Activated CD8-positive, alpha-beta memory T cell treated with anti-CD3 and anti-CD28 coated beads, Interleukin-2, amount 10 ng/mL, durations not matched to agents 7 days and 5 days (primary cell): ENCODE measurements at regions of chr1 and their contacts with region 1.

Region 1: DNA sequence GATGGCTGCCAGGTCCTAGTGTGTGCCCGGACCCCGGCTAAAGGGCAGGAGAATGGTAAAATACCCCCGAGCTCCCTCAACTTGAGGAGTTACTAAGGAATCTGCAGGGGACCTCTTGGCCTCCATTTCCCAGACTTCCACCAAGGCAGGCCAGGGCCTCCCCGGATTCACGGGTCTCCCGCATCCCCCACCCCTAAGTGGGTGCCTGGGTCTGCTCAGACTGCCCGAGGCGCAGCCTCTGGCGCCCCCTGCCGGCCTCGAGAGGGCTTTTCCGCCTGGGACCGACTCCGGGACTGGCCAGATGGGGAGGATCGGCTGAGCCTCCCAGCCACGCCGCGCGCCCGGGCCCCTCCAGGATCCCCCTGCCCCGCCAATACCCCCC is 1.7 kb downstream of the PLEKHG5 start:
- DNase-seq: peak; percentile 84
- ATAC-seq: peak; percentile 80
- H3K4me3 Mint-ChIP-seq: peak overlapping the region; percentile 73
- H3K27ac Mint-ChIP-seq: peak overlapping the region; percentile 78
- H3K4me1 Mint-ChIP-seq: peaks cover 9% of the 10 kb centered on the region
- H3K27me3 Mint-ChIP-seq: peaks cover 27% of the 10 kb centered on the region

Region 2: GRCh38 chr1:6343506-6344405 is 146.0 kb before region 1 on chr1:
- CTCF ChIA-PET with region 1: interaction called, 14 read pairs
- DNase-seq: peak; percentile 78
- ATAC-seq: peak; percentile 60
- H3K4me3 Mint-ChIP-seq: no peak overlapping the region
- H3K27ac Mint-ChIP-seq: no peak overlapping the region
- H3K4me1 Mint-ChIP-seq: peaks cover 10% of the 10 kb centered on the region
- H3K27me3 Mint-ChIP-seq: no peaks in the 10 kb centered on the region

Region 3: DNA sequence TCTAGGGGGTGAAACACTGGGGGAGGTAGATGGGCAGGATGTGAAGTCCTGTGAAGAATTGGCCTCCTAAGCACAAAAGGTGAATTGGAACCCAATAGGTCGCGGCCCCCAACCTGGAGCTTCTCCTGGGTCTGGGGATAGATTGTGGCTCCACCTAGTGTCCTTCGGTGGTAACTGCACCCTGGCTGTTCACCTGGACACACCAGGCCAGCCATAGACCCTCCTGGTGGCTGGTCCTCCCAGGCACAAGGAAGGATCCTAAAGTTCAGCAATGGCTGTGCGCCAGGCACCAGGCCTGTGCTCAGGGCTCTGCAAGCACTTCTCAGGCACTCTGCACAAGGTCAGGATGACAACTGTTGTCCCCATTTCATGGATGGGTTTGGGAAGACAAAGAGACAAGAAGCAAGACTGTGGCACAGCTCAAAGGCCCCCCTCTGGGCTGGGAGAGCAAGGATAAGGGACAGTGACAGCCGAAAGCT is 51.7 kb before region 1 on chr1:
- CTCF ChIA-PET with region 1: interaction called, 26 read pairs
- DNase-seq: peak; percentile 83
- ATAC-seq: peak; percentile 62
- H3K4me3 Mint-ChIP-seq: no peak overlapping the region
- H3K27ac Mint-ChIP-seq: no peak overlapping the region
- H3K4me1 Mint-ChIP-seq: peaks cover 3% of the 10 kb centered on the region
- H3K27me3 Mint-ChIP-seq: peaks cover 34% of the 10 kb centered on the region

Region 4: GRCh38 chr1:6475381-6476133 is 14.2 kb before region 1 on chr1:
- CTCF ChIA-PET with region 1: interaction called, 22 read pairs
- DNase-seq: peak; percentile 79
- ATAC-seq: peak; percentile 91
- H3K4me3 Mint-ChIP-seq: no peak overlapping the region
- H3K27ac Mint-ChIP-seq: no peak overlapping the region
- H3K4me1 Mint-ChIP-seq: no peaks in the 10 kb centered on the region
- H3K27me3 Mint-ChIP-seq: no peaks in the 10 kb centered on the region

Region 5: DNA sequence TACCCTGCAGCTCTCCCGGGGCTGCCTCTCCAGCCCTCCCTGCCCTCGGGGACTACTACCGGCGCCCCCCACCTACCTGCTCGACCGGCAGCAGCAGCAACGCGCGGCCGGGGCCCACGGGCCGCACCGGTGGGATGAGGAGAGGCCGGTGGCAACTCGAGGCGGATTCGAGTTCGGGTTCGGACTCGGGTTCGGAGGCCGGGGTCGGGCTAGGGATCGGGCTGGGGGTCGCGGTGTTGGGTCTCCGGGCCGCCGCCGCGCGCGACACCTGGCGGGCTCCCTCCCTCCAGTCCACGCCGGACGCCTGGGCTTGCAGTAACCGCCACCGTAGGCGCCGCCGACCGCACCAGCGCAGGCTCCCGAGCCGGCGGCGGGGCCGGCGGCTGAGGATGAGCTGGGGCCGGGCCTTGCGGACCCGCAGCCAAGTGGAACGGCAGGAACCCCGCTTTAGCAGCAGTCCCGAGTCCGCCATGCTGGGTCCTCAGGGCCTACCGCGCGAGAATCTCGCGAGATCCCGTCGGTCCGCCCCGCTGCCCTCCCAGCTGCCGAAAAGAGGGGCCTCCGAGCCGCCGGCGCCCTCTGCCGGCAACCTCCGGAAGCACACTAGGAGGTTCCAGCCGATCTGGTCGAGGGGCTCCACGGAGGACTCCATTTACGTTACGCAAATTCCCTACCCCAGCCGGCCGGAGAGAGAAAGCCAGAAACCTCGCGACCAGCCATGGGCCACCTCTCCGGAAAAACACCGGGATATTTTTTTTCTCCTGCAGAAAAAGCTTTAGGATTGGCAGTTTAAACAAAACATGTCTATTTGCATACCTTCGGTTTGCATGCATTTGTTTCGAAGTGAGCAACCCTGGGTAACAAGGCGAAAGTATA is 64.5 kb after region 1 on chr1 and contains the start of gene NOL9:
- CTCF ChIA-PET with region 1: interaction called, 33 read pairs
- DNase-seq: peak; percentile 97
- ATAC-seq: peak; percentile 98
- H3K4me3 Mint-ChIP-seq: peak within 1 kb of the TSS; percentile 76
- H3K27ac Mint-ChIP-seq: peak within 1 kb of the TSS; percentile 64
- H3K4me1 Mint-ChIP-seq: peaks cover 19% of the 10 kb centered on the region
- H3K27me3 Mint-ChIP-seq: no peaks in the 10 kb centered on the region
- total RNA-seq, gene NOL9: 32.5 to 39.1 TPM